Ovary (tissue), 10 donors: ENCODE measurements at regions of chr3 and their contacts with region 1.

Region 1: DNA sequence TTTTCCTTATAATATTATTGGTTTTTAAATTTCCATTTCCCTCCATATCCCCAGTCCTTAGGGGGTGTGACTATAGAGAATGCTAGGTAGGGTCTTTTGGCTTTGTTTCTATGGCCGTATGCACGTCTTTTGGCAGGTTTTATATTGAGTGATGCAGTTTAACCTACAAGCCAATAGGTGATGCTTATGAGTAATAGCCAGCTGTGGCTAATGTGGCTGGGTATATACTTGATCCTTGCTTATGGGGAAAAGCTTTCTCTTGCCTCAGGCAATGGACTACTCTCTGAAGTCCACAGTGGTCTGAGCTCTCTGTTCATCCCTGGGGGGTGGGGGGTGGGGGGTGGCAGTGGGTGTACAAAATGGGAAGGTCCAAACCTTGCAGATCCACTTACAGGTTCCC is 223.9 kb downstream of the MFSD1 start:
- DNase-seq: no peak
- H3K4me3 ChIP-seq: no peak overlapping the region
- H3K27ac ChIP-seq: no peak overlapping the region
- H3K4me1 ChIP-seq: no peaks in the 10 kb centered on the region
- H3K27me3 ChIP-seq: no peaks in the 10 kb centered on the region
- CTCF ChIP-seq: no peak
- EP300 ChIP-seq: no peak
- POLR2A ChIP-seq: no peak

Region 2: GRCh38 chr3:157844800-157845565 is 1180.8 kb before region 1 on chr3:
- intact Hi-C with region 1: no loop called
- DNase-seq: no peak
- H3K4me3 ChIP-seq: no peak overlapping the region
- H3K27ac ChIP-seq: no peak overlapping the region
- H3K4me1 ChIP-seq: no peaks in the 10 kb centered on the region
- H3K27me3 ChIP-seq: no peaks in the 10 kb centered on the region
- CTCF ChIP-seq: no peak
- EP300 ChIP-seq: no peak
- POLR2A ChIP-seq: no peak

Region 3: DNA sequence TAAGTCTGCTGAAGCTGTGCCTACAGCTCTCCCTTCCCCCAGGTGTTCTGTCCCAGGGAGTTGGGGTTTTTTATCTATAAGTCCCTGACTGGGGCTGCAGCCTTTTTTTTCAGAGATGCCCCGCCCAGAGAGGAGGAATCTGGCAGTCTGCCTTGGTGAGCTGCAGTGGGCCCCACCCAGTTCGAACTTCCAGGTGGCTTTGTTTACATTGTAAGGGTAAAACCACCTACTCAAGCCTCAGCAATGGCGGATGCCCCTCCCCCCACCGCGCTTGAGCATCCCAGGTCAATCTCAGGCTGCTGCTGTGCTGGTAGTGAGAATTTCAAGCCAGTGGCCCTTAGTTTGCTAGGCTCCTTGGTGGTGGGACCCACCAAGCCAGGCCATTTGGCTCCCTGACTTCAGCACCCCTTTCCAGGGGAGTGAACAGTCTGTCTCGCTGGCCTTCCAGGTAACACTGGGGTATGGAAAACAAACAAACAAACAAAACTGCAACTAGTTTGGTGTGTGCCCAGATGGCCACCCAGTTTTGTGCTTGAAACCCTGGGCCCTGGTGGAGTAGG is 34.5 kb before region 1 on chr3:
- intact Hi-C with region 1: loop called in 1 of 4 experiments (anchors 2 kb)
- DNase-seq: no peak
- H3K4me3 ChIP-seq: no peak overlapping the region
- H3K27ac ChIP-seq: no peak overlapping the region
- H3K4me1 ChIP-seq: no peaks in the 10 kb centered on the region
- H3K27me3 ChIP-seq: no peaks in the 10 kb centered on the region
- CTCF ChIP-seq: no peak
- EP300 ChIP-seq: no peak
- POLR2A ChIP-seq: no peak

Region 4: DNA sequence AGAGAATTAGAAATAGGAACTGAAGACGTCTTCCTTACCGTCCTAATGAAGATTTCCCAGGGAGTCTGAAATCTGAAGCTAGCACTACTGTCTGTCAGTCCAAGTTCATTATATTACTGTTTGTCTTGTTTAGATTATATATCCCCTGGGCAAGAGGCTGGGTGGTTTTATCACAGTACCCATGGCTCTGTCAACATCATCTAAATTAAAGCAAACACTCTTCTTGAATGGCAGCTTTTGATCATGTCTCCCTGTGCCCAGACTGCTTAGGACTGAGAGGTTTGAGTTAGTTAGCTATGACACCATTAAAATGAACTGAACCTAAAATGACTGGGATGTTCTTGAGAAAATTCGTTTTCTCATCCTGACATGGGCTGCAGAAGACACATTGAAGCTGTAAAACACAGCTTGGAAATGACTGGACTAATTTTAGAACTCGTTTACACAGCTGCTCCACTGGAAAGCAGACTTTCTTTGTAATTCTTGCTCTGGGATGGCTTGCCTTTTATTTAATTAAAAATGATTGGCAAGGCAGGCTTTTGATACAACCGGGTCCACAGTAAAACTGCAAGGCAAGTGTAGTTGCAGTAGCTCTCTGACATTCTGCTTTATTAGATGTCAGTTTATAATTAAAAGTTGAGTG is 19.7 kb after region 1 on chr3:
- intact Hi-C with region 1: no loop called
- DNase-seq: no peak
- H3K4me3 ChIP-seq: no peak overlapping the region
- H3K27ac ChIP-seq: no peak overlapping the region
- H3K4me1 ChIP-seq: no peaks in the 10 kb centered on the region
- H3K27me3 ChIP-seq: no peaks in the 10 kb centered on the region
- CTCF ChIP-seq: no peak
- EP300 ChIP-seq: no peak
- POLR2A ChIP-seq: no peak